GM23248 (cell line): ENCODE measurements at regions of chr1 and their contacts with region 1.

Region 1: DNA sequence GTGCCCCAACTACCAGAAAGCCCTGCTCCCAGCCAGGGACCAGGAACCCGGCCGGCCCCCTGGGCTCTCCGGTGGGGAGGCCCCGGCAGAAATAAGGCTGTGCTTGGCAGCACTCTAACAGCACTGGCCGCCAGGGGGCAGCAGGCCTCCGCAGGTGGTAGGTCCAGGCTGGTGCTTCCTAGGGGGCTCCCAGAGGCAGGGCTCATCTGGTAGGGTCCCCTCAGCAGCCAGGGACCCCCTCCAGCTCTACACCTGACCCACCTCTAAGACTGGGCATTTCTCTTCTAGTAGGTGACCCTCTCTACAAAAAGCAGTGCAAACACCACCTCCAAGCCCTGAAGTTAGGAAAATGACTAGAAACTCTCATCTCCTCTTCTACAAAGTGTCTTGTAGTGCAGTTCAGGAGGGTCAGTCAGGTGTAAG is 85.6 kb downstream of the STUM start:
- DNase-seq: peak; percentile 77
- H3K4me3 ChIP-seq: no peak overlapping the region
- H3K27ac ChIP-seq: no peak overlapping the region
- H3K4me1 ChIP-seq: no peaks in the 10 kb centered on the region
- H3K27me3 ChIP-seq: no peaks in the 10 kb centered on the region

Region 2: GRCh38 chr1:226827968-226828513 is 193.9 kb after region 1 on chr1:
- in situ Hi-C with region 1: loop called (anchors 5 kb)
- DNase-seq: peak; percentile 97
- H3K4me3 ChIP-seq: peak overlapping the region; percentile 34; the same call in 1 of the 2 replicates
- H3K27ac ChIP-seq: peak overlapping the region; percentile 10; the same call in 1 of the 2 replicates
- H3K4me1 ChIP-seq: peaks cover 7% of the 10 kb centered on the region
- H3K27me3 ChIP-seq: no peaks in the 10 kb centered on the region

Region 3: DNA sequence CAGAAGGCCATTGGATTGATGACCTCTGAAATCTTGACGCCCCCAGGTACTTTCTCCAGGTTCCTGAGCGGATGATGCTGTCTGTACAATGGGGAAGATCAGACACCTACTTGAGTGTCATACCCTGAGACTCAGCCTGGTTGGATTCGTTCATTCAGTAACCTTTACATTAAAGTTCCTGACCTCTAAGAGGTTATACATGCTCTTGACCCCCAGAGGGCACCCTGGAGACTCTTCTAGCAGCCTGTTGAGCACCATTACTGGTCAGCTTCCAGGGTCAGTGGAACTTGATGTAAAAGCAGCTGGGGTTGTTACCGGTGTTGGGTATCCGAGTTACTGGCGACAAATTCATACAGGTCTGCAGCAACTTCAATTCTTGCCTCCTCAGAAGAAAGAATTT is 814.9 kb after region 1 on chr1:
- in situ Hi-C with region 1: loop called (anchors 10 kb)
- DNase-seq: peak; percentile 65
- H3K4me3 ChIP-seq: no peak overlapping the region
- H3K27ac ChIP-seq: no peak overlapping the region
- H3K4me1 ChIP-seq: no peaks in the 10 kb centered on the region
- H3K27me3 ChIP-seq: peaks cover 8% of the 10 kb centered on the region; the same call in 1 of the 2 replicates